Activated CD8-positive, alpha-beta T cell treated with anti-CD3 and anti-CD28 coated beads for 36 hours (primary cell): ENCODE measurements at regions of chr4 and their contacts with region 1.

Region 1: GRCh38 chr4:173301518-173302201 is 32.5 kb downstream of the HMGB2 start:
- DNase-seq: peak; percentile 28
- ATAC-seq: peak; percentile 67
- H3K4me3 Mint-ChIP-seq: no peak overlapping the region
- H3K27ac Mint-ChIP-seq: no peak overlapping the region
- H3K4me1 Mint-ChIP-seq: peaks cover 3% of the 10 kb centered on the region
- H3K27me3 Mint-ChIP-seq: no peaks in the 10 kb centered on the region
- CTCF ChIP-seq: peak; percentile 84

Region 2: DNA sequence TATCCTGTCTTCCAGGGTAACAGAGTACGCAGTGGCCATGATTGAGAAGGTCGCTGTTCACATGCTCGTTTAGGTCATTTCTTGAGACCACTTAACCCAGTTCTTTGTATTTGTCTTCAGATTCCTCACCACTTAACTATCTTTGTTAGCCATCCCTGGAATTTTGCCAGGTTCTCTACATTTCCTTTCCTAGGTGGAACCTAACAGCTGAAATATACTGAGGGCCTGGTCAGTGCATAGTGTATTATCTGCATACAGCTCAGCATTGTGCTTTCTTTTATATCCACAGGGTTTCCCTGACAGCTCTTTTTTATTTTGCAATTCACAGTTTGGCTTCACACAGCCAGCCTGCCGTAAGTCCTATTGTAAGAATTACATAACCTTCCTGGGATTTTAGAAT is 281.9 kb before region 1 on chr4:
- CTCF ChIA-PET with region 1: interaction called, 98 read pairs
- POLR2A ChIA-PET with region 1: no interaction called
- intact Hi-C with region 1: no loop called
- DNase-seq: no peak
- ATAC-seq: no peak
- H3K4me3 Mint-ChIP-seq: no peak overlapping the region
- H3K27ac Mint-ChIP-seq: no peak overlapping the region
- H3K4me1 Mint-ChIP-seq: no peaks in the 10 kb centered on the region
- H3K27me3 Mint-ChIP-seq: no peaks in the 10 kb centered on the region
- CTCF ChIP-seq: no peak

Region 3: GRCh38 chr4:173264684-173265185 is 36.9 kb before region 1 on chr4:
- CTCF ChIA-PET with region 1: interaction called, 21 read pairs
- POLR2A ChIA-PET with region 1: no interaction called
- intact Hi-C with region 1: no loop called
- DNase-seq: peak; percentile 26
- ATAC-seq: peak; percentile 49
- H3K4me3 Mint-ChIP-seq: peak overlapping the region; percentile 0
- H3K27ac Mint-ChIP-seq: no peak overlapping the region
- H3K4me1 Mint-ChIP-seq: peaks cover 24% of the 10 kb centered on the region
- H3K27me3 Mint-ChIP-seq: no peaks in the 10 kb centered on the region
- CTCF ChIP-seq: no peak

Region 4: DNA sequence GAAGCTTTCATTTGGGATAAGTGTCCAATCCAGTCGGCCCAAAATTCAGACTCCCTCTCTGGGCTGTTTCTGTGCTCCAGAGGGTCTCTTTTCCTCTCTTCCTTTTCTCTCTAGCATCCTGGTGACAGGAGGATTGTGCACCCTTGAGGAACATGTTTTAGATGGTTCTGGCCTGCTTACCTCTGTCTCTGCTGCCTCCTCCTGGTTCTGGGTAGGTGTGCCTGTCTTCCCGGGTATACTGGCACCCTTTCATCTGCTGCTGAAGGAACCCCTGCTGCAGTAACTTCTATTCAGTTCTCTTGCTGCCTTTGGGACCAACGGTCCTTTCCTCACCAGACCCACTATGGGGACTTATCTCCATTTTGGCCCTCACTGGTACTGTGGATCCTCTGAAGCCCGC is 20.7 kb before region 1 on chr4:
- CTCF ChIA-PET with region 1: interaction called, 20 read pairs
- POLR2A ChIA-PET with region 1: interaction called, 4 read pairs
- intact Hi-C with region 1: no loop called
- DNase-seq: no peak
- ATAC-seq: no peak
- H3K4me3 Mint-ChIP-seq: no peak overlapping the region
- H3K27ac Mint-ChIP-seq: no peak overlapping the region
- H3K4me1 Mint-ChIP-seq: peaks cover 4% of the 10 kb centered on the region
- H3K27me3 Mint-ChIP-seq: no peaks in the 10 kb centered on the region
- CTCF ChIP-seq: no peak

Region 5: GRCh38 chr4:173318648-173319211 is 17.1 kb after region 1 on chr4:
- CTCF ChIA-PET with region 1: interaction called, 48 read pairs
- POLR2A ChIA-PET with region 1: interaction called, 4 read pairs
- intact Hi-C with region 1: no loop called
- DNase-seq: no peak
- ATAC-seq: peak; percentile 64
- H3K4me3 Mint-ChIP-seq: no peak overlapping the region
- H3K27ac Mint-ChIP-seq: no peak overlapping the region
- H3K4me1 Mint-ChIP-seq: peaks cover 9% of the 10 kb centered on the region
- H3K27me3 Mint-ChIP-seq: no peaks in the 10 kb centered on the region
- CTCF ChIP-seq: peak; percentile 65

Region 6: GRCh38 chr4:173403051-173403450 is 101.4 kb after region 1 on chr4:
- CTCF ChIA-PET with region 1: interaction called, 10 read pairs
- POLR2A ChIA-PET with region 1: no interaction called
- intact Hi-C with region 1: no loop called
- DNase-seq: no peak
- ATAC-seq: no peak
- H3K4me3 Mint-ChIP-seq: no peak overlapping the region
- H3K27ac Mint-ChIP-seq: no peak overlapping the region
- H3K4me1 Mint-ChIP-seq: no peaks in the 10 kb centered on the region
- H3K27me3 Mint-ChIP-seq: no peaks in the 10 kb centered on the region
- CTCF ChIP-seq: no peak

Region 7: GRCh38 chr4:173420324-173420752 is 118.7 kb after region 1 on chr4:
- CTCF ChIA-PET with region 1: interaction called, 11 read pairs
- POLR2A ChIA-PET with region 1: no interaction called
- intact Hi-C with region 1: no loop called
- DNase-seq: no peak
- ATAC-seq: no peak
- H3K4me3 Mint-ChIP-seq: no peak overlapping the region
- H3K27ac Mint-ChIP-seq: no peak overlapping the region
- H3K4me1 Mint-ChIP-seq: peaks cover 6% of the 10 kb centered on the region
- H3K27me3 Mint-ChIP-seq: no peaks in the 10 kb centered on the region
- CTCF ChIP-seq: peak; percentile 42

Region 8: DNA sequence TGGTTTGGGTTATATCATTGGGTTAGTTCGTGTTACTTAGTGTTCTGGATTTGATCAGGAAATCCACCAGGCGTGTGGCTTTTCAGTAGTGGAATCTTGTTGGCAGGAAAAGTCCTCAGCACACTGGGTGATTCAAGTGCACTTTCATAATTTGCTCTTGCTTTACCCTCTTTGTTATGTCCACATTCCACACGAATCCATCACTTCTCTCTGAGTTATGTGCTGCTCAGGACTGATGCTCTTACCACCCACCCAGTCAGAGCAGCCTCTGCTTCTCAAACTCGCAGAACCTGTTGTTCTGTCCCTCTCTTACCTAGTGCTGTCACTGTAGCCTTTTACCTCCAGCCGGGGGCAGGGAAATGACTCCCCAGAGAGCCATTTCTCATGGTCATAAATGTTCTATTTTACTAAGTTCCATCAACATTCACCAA is 134.5 kb after region 1 on chr4:
- CTCF ChIA-PET with region 1: no interaction called
- POLR2A ChIA-PET with region 1: no interaction called
- intact Hi-C with region 1: no loop called
- DNase-seq: no peak
- ATAC-seq: no peak
- H3K4me3 Mint-ChIP-seq: no peak overlapping the region
- H3K27ac Mint-ChIP-seq: no peak overlapping the region
- H3K4me1 Mint-ChIP-seq: peaks cover 2% of the 10 kb centered on the region
- H3K27me3 Mint-ChIP-seq: no peaks in the 10 kb centered on the region
- CTCF ChIP-seq: no peak

Region 9: GRCh38 chr4:173669460-173670179 is 368.0 kb after region 1 on chr4:
- CTCF ChIA-PET with region 1: no interaction called
- POLR2A ChIA-PET with region 1: no interaction called
- intact Hi-C with region 1: no loop called
- DNase-seq: no peak
- ATAC-seq: no peak
- H3K4me3 Mint-ChIP-seq: no peak overlapping the region
- H3K27ac Mint-ChIP-seq: no peak overlapping the region
- H3K4me1 Mint-ChIP-seq: no peaks in the 10 kb centered on the region
- H3K27me3 Mint-ChIP-seq: no peaks in the 10 kb centered on the region
- CTCF ChIP-seq: no peak